Dorsolateral prefrontal cortex (tissue), 120 donors: ENCODE measurements at regions of chr21 and their contacts with region 1.

Region 1: DNA sequence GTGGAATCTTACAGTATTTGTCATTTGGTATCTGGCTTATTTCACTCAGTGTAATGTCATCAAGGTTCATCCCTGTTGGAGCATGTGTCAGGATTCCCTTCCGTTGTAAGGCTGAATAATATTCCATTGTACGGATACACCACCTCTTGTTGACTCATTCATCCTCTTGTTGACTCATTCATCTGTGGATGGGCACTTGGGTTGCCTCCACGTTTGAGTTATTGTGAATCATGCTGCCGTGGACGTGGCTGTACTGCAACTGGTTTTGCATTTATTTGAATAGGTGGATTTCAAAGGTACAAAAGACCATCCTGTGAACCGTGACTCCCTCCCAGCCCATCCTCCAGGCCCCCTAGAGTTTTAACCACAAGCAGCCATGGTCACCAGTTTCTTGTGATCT is 11.9 kb upstream of the TCP10L start:
- DNase-seq: no peak
- H3K4me3 ChIP-seq: no peak overlapping the region
- H3K27ac ChIP-seq: peak overlapping the region in 1 of 59 donors; percentile 28
- H3K27me3 ChIP-seq: no peaks in the 10 kb centered on the region
- CTCF ChIP-seq: no peak

Region 2: GRCh38 chr21:32403201-32403777 is 193.9 kb before region 1 on chr21:
- intact Hi-C with region 1: loop called in 1 of 2 experiments (anchors 2 kb)
- DNase-seq: peak in 8 of 10 donors; percentile 25 to 75 (median 60)
- H3K4me3 ChIP-seq: peak overlapping the region in 1 of 59 donors; percentile 0
- H3K27ac ChIP-seq: peak overlapping the region in 6 of 59 donors; percentile 6 to 39 (median 19)
- H3K27me3 ChIP-seq: no peaks in the 10 kb centered on the region
- CTCF ChIP-seq: peak; percentile 41 to 90 (median 80)